Gastrocnemius medialis (tissue), 4 donors: ENCODE measurements at regions of chr1 and their contacts with region 1.

Region 1: GRCh38 chr1:54310439-54311328 is 95.5 kb downstream of the SSBP3 start:
- DNase-seq: peak in 1 of 2 donors; percentile 40
- ATAC-seq: peak in 1 of 2 donors; percentile 30
- H3K4me3 ChIP-seq: no peak overlapping the region
- H3K27ac ChIP-seq: peak overlapping the region; percentile 64 to 72 (median 66)
- H3K4me1 ChIP-seq: peaks cover 57 to 60% of the 10 kb centered on the region in 2 donors
- H3K27me3 ChIP-seq: no peaks in the 10 kb centered on the region
- CTCF ChIP-seq: peak; percentile 46 to 66 (median 63)
- POLR2A ChIP-seq: no peak

Region 2: GRCh38 chr1:54249819-54250435 is 60.8 kb before region 1 on chr1:
- in situ Hi-C with region 1: no loop called
- intact Hi-C with region 1: no loop called
- DNase-seq: peak; percentile 40 to 64
- ATAC-seq: peak; percentile 68
- H3K4me3 ChIP-seq: no peak overlapping the region
- H3K27ac ChIP-seq: peak overlapping the region; percentile 53 to 80 (median 64)
- H3K4me1 ChIP-seq: peaks cover 9 to 27% of the 10 kb centered on the region in 2 donors
- H3K27me3 ChIP-seq: no peaks in the 10 kb centered on the region
- CTCF ChIP-seq: no peak
- POLR2A ChIP-seq: no peak

Region 3: GRCh38 chr1:54327386-54328065 is 16.8 kb after region 1 on chr1:
- in situ Hi-C with region 1: no loop called
- intact Hi-C with region 1: loop called (anchors 2 kb)
- DNase-seq: no peak
- ATAC-seq: no peak
- H3K4me3 ChIP-seq: no peak overlapping the region
- H3K27ac ChIP-seq: peak overlapping the region; percentile 65 to 81 (median 74)
- H3K4me1 ChIP-seq: peaks cover 96 to 98% of the 10 kb centered on the region in 2 donors
- H3K27me3 ChIP-seq: no peaks in the 10 kb centered on the region
- CTCF ChIP-seq: no peak
- POLR2A ChIP-seq: no peak

Region 4: GRCh38 chr1:54361342-54361741 is 50.7 kb after region 1 on chr1:
- in situ Hi-C with region 1: no loop called
- intact Hi-C with region 1: loop called (anchors 5 kb)
- DNase-seq: no peak
- ATAC-seq: no peak
- H3K4me3 ChIP-seq: no peak overlapping the region
- H3K27ac ChIP-seq: no peak overlapping the region
- H3K4me1 ChIP-seq: peaks cover 58 to 75% of the 10 kb centered on the region in 2 donors
- H3K27me3 ChIP-seq: no peaks in the 10 kb centered on the region
- CTCF ChIP-seq: no peak
- POLR2A ChIP-seq: no peak